Dendritic cell treated with granulocyte-macrophage colony-stimulating factor and Interleukin-4, amounts not matched to agents 40 ng/mL and 50 ng/mL, for 4 days (primary cell): ENCODE measurements at regions of chr18 and their contacts with region 1.

Region 1: GRCh38 chr18:75273817-75274216 is 63.2 kb downstream of the TSHZ1 start:
- H3K4me3 Mint-ChIP-seq: no peak overlapping the region
- H3K27ac Mint-ChIP-seq: no peak overlapping the region
- H3K4me1 Mint-ChIP-seq: peaks cover 15% of the 10 kb centered on the region
- H3K27me3 Mint-ChIP-seq: no peaks in the 10 kb centered on the region

Region 2: GRCh38 chr18:75293591-75293990 is 19.8 kb after region 1 on chr18:
- intact Hi-C with region 1: loop called (anchors 2 kb)
- H3K4me3 Mint-ChIP-seq: no peak overlapping the region
- H3K27ac Mint-ChIP-seq: no peak overlapping the region
- H3K4me1 Mint-ChIP-seq: no peaks in the 10 kb centered on the region
- H3K27me3 Mint-ChIP-seq: no peaks in the 10 kb centered on the region